ENCODE measurements at regions of chr3 and their contacts with region 1.

Region 1: DNA sequence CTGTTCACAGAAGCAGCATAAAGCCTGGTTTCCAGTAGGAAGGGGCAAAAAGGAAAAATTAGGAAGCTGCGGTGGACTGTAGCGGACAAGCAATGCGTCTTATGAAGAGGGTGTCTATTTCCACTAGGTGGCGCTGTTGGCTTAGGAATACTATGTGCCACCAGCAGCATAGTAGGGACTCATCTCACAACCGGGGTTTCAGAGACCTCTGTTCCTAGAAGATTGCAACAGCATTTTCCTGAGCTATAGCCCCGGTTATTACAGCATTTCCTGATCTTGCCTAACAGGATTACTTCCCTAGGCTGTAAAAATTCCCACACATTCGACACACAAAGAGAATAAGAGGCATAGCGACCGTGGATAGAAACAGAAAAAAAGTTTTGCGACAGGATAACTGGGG is 683.0 kb downstream of the TBL1XR1 start:
- DNase-seq: no peak
- H3K4me3 ChIP-seq: no peak overlapping the region
- H3K27ac ChIP-seq: no peak overlapping the region
- H3K4me1 ChIP-seq: no peaks in the 10 kb centered on the region
- H3K27me3 ChIP-seq: no peaks in the 10 kb centered on the region
- CTCF ChIP-seq: peak; percentile 48 to 70 (median 53)

Region 2: DNA sequence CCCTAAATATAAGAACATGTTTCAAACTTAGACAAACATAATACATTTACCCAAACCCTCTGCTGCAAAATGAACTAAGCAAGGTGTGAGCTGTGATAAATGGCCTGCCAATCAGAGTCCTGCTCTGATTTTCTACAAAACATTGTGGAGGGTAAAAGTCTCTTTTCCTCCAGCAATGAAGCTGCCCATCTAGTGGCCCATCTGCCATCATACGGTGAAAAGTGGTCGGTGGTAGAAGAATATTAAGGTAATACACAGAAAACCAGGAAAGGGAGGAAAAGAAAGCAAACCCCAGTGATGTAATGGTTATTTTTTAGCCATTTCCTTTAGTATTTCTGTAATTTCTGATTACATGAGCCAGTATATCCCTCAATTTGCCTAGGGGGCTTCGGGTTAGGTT is 155.1 kb before region 1 on chr3:
- dilution Hi-C with region 1: no loop called
- DNase-seq: no peak
- H3K4me3 ChIP-seq: no peak overlapping the region
- H3K27ac ChIP-seq: no peak overlapping the region
- H3K4me1 ChIP-seq: no peaks in the 10 kb centered on the region
- H3K27me3 ChIP-seq: no peaks in the 10 kb centered on the region
- CTCF ChIP-seq: no peak

Region 3: DNA sequence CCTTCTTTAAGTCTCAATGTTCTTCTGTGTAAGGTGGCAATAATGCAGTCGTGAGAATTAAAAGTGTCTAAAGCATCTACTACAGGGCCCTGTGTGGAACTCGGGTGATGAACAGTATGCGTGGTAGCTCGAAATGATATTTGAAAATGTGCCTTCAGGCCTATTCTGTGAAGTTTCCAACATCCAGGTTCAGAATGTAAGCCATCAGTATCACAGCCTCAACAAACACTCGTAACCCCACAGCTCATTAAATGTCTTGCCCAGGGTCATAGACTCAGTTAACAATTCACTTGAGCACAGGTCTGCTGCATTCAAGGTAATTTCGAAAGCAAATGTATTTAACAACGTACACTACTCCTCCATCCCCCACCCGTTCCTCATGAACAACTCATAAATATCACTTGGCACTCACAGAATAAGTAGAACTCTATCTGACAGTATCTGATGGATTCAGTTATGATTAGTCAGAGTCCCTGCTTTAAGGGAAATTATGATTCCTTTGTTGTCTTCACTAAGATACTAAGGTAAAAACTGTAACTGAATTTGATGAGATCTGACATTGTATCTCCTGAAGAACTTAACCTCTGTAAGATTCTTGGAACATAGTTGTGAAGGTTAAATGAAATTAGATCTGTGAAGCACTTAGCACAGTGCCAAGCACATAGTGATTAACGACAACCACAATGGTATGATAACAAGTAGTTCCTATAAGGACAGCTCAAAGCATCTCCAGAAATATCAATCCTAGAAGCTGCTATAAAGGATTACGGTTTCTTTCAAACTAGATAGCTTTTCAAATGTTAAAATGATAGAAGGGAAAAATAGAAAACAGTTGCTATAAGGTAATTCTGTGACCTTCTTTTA is 40.7 kb after region 1 on chr3:
- dilution Hi-C with region 1: no loop called
- DNase-seq: no peak
- H3K4me3 ChIP-seq: no peak overlapping the region
- H3K27ac ChIP-seq: no peak overlapping the region
- H3K4me1 ChIP-seq: no peaks in the 10 kb centered on the region
- H3K27me3 ChIP-seq: no peaks in the 10 kb centered on the region
- CTCF ChIP-seq: no peak

Region 4: DNA sequence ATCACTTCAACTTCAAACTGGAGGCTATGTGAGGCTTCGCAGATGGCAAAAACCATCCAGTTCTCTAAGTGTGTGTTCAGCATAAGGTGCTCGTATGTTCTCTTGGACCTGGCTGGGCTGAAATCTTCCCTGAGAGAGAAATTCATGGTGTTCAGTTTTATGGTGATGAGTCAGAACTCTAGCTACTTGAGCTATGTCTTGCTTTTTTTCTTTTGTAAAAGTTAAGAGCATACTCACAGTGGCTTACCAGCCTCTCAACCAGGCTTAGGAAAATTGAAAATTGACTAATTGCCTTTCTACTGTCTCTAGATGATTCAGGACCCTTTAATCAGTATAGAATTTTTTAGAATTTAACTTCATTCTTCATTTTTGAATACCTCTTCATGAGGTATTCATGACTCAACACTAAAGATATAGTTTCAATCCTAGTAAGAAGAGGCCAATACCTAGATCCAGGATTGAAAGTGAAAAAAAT is 65.5 kb after region 1 on chr3:
- dilution Hi-C with region 1: no loop called
- DNase-seq: no peak
- H3K4me3 ChIP-seq: no peak overlapping the region
- H3K27ac ChIP-seq: no peak overlapping the region
- H3K4me1 ChIP-seq: no peaks in the 10 kb centered on the region
- H3K27me3 ChIP-seq: no peaks in the 10 kb centered on the region
- CTCF ChIP-seq: no peak

Region 5: GRCh38 chr3:176939022-176939817 is 424.9 kb after region 1 on chr3:
- dilution Hi-C with region 1: loop called (anchors 25 kb)
- DNase-seq: peak; percentile 61
- H3K4me3 ChIP-seq: no peak overlapping the region
- H3K27ac ChIP-seq: no peak overlapping the region
- H3K4me1 ChIP-seq: no peaks in the 10 kb centered on the region
- H3K27me3 ChIP-seq: no peaks in the 10 kb centered on the region
- CTCF ChIP-seq: peak; percentile 68 to 75 (median 74)

Measured in keratinocyte (primary cell).